MCF 10A (cell line): ENCODE measurements at regions of chr2 and their contacts with region 1.

Region 1: GRCh38 chr2:125471963-125472362 is 1184.0 kb upstream of the GYPC start:
- DNase-seq: peak; percentile 51
- H3K4me3 Mint-ChIP-seq: no peak overlapping the region
- H3K27ac Mint-ChIP-seq: no peak overlapping the region
- H3K4me1 Mint-ChIP-seq: no peaks in the 10 kb centered on the region
- H3K27me3 Mint-ChIP-seq: no peaks in the 10 kb centered on the region
- CTCF ChIP-seq: peak; percentile 79

Region 2: DNA sequence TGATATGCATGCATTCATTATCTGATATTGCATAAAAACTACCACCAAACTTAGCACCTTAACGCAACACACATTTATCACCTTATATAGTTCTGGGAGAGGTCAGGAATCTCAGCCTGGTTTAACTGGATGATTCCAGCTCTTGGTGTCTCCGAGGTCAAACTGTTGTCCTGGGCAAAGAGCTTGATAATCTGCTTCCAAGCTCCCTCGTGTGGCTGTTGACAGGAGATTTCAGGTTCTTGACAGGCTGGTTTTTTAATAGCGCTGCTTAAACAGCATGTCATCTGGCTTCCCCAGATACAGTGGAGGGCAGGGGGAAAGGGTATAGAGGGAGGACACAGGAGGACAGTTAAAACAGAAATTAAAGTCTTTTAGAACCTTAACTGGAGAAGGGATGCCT is 661.8 kb before region 1 on chr2:
- CTCF ChIA-PET with region 1: no interaction called
- POLR2A ChIA-PET with region 1: no interaction called
- intact Hi-C with region 1: loop called (anchors 5 kb)
- DNase-seq: peak; percentile 72
- H3K4me3 Mint-ChIP-seq: no peak overlapping the region
- H3K27ac Mint-ChIP-seq: no peak overlapping the region
- H3K4me1 Mint-ChIP-seq: peaks cover 7% of the 10 kb centered on the region
- H3K27me3 Mint-ChIP-seq: no peaks in the 10 kb centered on the region
- CTCF ChIP-seq: peak; percentile 54

Region 3: DNA sequence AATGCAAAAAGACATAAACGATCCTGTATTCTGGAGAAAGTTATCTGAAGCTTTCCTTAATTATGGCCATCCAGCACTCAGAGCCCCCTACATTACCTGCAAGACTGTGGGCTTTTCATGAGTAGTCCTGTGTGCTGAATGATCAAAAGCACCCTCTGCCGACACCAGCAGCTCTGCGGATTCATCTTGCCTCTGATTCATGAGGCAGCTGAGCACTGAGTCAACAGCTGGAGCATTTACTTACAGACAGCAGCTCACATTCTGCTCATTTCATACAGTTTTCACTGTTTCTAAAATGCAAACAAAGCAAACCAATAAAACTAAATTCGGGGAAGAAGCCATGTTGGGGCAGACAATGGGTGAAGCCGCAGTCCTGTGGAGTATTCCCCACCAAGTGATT is 560.4 kb before region 1 on chr2:
- CTCF ChIA-PET with region 1: interaction called, 12 read pairs
- POLR2A ChIA-PET with region 1: interaction called, 3 read pairs
- intact Hi-C with region 1: loop called (anchors 1 kb)
- DNase-seq: peak; percentile 28
- H3K4me3 Mint-ChIP-seq: no peak overlapping the region
- H3K27ac Mint-ChIP-seq: no peak overlapping the region
- H3K4me1 Mint-ChIP-seq: peaks cover 25% of the 10 kb centered on the region
- H3K27me3 Mint-ChIP-seq: no peaks in the 10 kb centered on the region
- CTCF ChIP-seq: no peak

Region 4: DNA sequence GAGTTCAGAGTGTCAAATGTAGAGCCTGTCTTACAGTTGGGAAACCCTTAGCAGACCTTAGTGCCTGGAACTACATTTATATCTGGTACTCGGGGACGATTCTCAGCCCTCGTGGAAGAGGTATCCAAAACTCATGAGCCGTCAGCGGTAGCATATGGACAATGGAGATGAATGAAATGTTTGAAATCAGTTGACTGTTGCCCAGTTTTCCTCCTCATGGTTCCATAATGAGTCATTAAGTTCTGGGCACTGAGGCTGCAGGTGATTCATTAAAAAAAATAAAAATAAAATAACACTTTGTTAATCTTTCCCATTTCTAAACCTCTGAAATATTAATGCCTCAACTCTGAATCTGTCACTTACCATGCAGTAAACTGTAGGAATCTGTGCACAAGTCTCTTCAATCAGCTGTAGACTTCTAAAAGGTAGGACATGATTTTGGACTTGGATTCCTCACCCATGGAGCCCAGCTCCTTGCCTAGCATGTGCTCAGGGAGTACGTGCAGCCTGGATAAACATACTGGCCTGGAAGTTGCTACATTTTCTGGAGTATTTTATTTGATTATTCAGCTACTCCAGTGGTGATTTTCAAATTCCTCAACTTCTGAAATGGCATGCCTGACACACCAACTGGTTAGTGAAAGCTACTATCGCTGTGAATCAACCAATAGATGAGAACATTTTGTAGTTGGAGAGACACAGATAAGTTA is 467.7 kb before region 1 on chr2:
- CTCF ChIA-PET with region 1: no interaction called
- POLR2A ChIA-PET with region 1: no interaction called
- intact Hi-C with region 1: loop called (anchors 5 kb)
- DNase-seq: peak; percentile 70
- H3K4me3 Mint-ChIP-seq: no peak overlapping the region
- H3K27ac Mint-ChIP-seq: peak overlapping the region; percentile 44
- H3K4me1 Mint-ChIP-seq: peaks cover 17% of the 10 kb centered on the region
- H3K27me3 Mint-ChIP-seq: no peaks in the 10 kb centered on the region
- CTCF ChIP-seq: no peak

Region 5: DNA sequence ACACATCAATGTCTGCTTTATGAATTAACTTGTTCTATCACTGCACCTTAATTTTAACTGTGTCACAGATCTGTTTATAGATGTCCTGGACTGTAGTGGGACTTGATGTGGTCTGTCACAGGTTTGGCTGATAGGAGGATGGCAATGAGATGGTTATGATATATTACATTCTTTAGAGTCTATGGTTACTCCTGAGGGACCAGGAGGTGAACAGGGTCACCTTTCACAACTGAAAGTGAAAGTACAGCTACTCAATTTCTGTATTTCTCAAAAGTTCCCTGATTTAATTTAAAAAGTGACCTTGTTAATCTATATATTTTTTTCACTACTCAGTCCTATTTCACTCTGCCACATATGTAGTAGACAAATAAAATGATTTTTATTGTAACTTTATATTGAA is 100.1 kb before region 1 on chr2:
- CTCF ChIA-PET with region 1: no interaction called
- POLR2A ChIA-PET with region 1: no interaction called
- intact Hi-C with region 1: no loop called
- DNase-seq: peak; percentile 2
- H3K4me3 Mint-ChIP-seq: no peak overlapping the region
- H3K27ac Mint-ChIP-seq: no peak overlapping the region
- H3K4me1 Mint-ChIP-seq: no peaks in the 10 kb centered on the region
- H3K27me3 Mint-ChIP-seq: no peaks in the 10 kb centered on the region
- CTCF ChIP-seq: no peak

Region 6: DNA sequence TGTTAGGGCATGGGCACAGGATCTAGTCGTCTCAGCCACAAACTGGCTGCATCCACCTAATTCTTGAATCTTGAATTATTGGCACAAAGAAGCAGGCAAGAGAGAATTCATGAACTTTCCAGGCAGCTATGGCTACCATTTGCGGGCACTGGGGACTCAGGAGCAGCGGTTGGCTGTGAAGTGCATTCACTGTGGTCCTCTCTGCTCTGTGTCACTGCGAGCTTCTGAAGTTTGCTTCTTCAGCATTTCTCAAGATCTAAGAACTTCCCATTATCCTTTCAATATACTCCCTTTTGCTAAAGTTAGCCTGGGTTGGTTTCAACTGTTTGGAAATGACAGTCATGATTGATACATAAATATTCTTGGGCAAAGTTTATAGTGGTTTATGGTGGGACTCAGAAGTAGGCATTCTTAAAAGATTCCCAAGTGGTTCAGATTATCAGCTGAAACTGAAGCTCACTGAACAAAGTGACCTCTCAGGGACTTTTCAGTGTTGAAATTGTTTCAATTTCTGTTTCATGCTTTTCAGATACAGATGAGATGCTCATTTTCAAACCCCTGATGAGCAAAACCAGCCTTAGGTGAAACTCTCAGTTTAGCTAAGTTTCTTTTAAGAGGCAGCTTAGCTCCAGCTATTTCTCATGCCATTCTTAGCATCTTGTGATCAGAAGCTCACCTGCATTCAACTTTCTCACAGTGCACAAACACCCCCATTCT is 74.3 kb before region 1 on chr2:
- CTCF ChIA-PET with region 1: no interaction called
- POLR2A ChIA-PET with region 1: no interaction called
- intact Hi-C with region 1: no loop called
- DNase-seq: no peak
- H3K4me3 Mint-ChIP-seq: no peak overlapping the region
- H3K27ac Mint-ChIP-seq: no peak overlapping the region
- H3K4me1 Mint-ChIP-seq: peaks cover 12% of the 10 kb centered on the region
- H3K27me3 Mint-ChIP-seq: no peaks in the 10 kb centered on the region
- CTCF ChIP-seq: no peak

Region 7: DNA sequence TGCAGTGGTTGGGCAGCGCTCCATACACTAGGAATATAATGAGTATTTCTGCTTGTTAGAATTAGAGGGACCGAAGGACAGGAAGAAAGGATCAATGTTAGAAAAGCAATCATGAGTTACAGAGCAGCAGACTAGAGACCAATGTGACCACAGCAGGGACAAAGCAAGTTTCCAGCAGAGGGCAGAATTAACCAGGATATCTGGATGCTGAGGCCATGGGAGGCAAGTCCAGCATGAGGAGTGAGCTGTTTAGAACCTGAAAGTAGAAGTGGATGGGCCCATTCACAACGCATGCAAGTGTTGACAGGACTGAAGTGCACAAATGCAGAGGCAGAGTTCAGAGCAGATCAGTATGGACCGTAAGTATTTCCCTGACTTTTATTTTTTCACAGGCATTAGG is 273.6 kb after region 1 on chr2:
- CTCF ChIA-PET with region 1: no interaction called
- POLR2A ChIA-PET with region 1: no interaction called
- intact Hi-C with region 1: no loop called
- DNase-seq: peak; percentile 67
- H3K4me3 Mint-ChIP-seq: no peak overlapping the region
- H3K27ac Mint-ChIP-seq: no peak overlapping the region
- H3K4me1 Mint-ChIP-seq: peaks cover 11% of the 10 kb centered on the region
- H3K27me3 Mint-ChIP-seq: no peaks in the 10 kb centered on the region
- CTCF ChIP-seq: peak; percentile 55